MCF 10A (cell line): ENCODE measurements at regions of chrX and their contacts with region 1.

Region 1: DNA sequence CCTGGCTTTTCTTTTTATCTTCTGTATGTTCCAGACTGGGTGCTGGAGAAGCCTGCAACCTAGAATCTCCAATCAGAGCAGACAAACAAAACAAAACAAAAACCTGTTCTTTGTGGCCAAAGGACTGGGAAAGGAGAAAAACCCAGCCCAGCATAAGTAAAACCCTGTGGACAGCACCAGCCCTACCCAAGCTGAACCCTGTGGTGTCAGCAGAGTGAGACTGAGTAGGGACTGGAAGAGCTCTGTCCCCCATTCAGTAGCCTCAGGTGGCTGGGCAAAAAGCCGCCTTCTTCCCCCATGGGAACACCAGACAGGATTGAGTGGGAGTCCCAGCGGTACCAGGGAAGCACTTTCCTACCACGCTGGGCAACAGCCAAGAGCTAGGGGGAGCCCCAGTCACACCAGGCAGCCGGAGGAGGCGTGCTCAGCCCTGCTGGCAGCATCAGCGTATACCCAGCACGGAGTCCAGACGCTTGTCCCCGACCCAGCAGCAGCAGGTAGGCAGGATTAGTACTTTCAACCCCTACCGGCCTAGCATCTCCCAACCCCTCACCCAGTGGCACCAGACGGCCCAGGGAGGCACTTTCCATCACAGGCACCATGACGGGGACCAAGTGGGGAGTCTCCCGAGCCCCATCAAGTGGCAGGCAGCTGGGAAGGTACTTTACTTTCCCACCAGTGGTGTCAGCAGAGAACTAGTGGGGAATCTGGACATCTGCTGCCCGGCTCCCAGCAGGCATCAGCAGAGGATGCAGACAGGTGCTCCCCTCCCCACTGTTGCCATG is 8.6 kb upstream of the JADE3 start:
- DNase-seq: peak; percentile 81
- H3K4me3 Mint-ChIP-seq: peak overlapping the region; percentile 70
- H3K27ac Mint-ChIP-seq: no peak overlapping the region
- H3K4me1 Mint-ChIP-seq: no peaks in the 10 kb centered on the region
- H3K27me3 Mint-ChIP-seq: peaks cover 59% of the 10 kb centered on the region
- CTCF ChIP-seq: peak; percentile 42

Region 2: DNA sequence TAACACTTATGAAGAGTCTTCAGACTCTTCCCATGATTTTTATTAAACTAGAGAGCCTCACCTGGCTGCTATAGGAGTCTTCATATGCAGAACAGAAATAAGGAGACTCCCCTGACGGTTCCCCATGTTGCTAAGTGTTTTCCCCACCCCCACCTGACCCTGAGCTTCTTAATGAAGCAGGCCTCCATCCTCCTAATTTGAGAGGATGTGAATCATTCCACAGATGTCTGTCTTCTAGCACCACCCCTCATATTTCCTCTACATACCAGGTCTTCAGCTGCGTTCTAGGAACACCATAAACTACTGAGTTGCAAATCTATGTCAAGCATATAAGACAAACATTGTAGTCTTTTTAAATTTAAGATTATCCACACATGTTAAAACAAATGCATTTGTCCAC is 29.9 kb before region 1 on chrX:
- CTCF ChIA-PET with region 1: interaction called, 10 read pairs
- POLR2A ChIA-PET with region 1: no interaction called
- intact Hi-C with region 1: no loop called
- DNase-seq: peak; percentile 3
- H3K4me3 Mint-ChIP-seq: no peak overlapping the region
- H3K27ac Mint-ChIP-seq: no peak overlapping the region
- H3K4me1 Mint-ChIP-seq: peaks cover 6% of the 10 kb centered on the region
- H3K27me3 Mint-ChIP-seq: peaks cover 54% of the 10 kb centered on the region
- CTCF ChIP-seq: no peak

Region 3: GRCh38 chrX:46978341-46979291 is 75.0 kb after region 1 on chrX:
- CTCF ChIA-PET with region 1: interaction called, 22 read pairs
- POLR2A ChIA-PET with region 1: interaction called, 4 read pairs
- intact Hi-C with region 1: loop called (anchors 1 kb)
- DNase-seq: peak; percentile 86
- H3K4me3 Mint-ChIP-seq: no peak overlapping the region
- H3K27ac Mint-ChIP-seq: peak overlapping the region; percentile 67
- H3K4me1 Mint-ChIP-seq: no peaks in the 10 kb centered on the region
- H3K27me3 Mint-ChIP-seq: peaks cover 56% of the 10 kb centered on the region
- CTCF ChIP-seq: peak; percentile 71

Region 4: DNA sequence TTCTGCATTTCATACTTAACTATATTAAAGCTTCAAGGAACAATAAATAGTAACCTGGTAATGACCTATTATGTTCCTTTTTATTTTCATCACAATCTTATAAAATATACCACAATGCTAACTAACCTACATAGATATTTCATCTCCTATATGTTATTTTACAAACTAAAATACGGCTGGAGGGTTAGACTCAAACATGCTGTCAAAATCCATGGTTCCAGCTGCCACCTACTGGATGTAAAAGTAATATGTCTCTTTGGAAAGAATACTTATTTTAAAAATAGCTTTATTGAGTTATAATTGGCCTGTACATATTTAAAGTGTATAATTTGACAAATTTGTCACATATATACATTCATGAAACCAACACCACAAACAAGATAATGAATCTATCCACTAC is 189.6 kb after region 1 on chrX:
- CTCF ChIA-PET with region 1: interaction called, 4 read pairs
- POLR2A ChIA-PET with region 1: no interaction called
- intact Hi-C with region 1: loop called (anchors 2 kb)
- DNase-seq: peak; percentile 47
- H3K4me3 Mint-ChIP-seq: no peak overlapping the region
- H3K27ac Mint-ChIP-seq: no peak overlapping the region
- H3K4me1 Mint-ChIP-seq: no peaks in the 10 kb centered on the region
- H3K27me3 Mint-ChIP-seq: peaks cover 88% of the 10 kb centered on the region
- CTCF ChIP-seq: no peak

Region 5: GRCh38 chrX:47321386-47321785 is 417.7 kb after region 1 on chrX:
- CTCF ChIA-PET with region 1: no interaction called
- POLR2A ChIA-PET with region 1: no interaction called
- intact Hi-C with region 1: no loop called
- DNase-seq: no peak
- H3K4me3 Mint-ChIP-seq: no peak overlapping the region
- H3K27ac Mint-ChIP-seq: no peak overlapping the region
- H3K4me1 Mint-ChIP-seq: no peaks in the 10 kb centered on the region
- H3K27me3 Mint-ChIP-seq: peaks cover 18% of the 10 kb centered on the region
- CTCF ChIP-seq: no peak

Region 6: DNA sequence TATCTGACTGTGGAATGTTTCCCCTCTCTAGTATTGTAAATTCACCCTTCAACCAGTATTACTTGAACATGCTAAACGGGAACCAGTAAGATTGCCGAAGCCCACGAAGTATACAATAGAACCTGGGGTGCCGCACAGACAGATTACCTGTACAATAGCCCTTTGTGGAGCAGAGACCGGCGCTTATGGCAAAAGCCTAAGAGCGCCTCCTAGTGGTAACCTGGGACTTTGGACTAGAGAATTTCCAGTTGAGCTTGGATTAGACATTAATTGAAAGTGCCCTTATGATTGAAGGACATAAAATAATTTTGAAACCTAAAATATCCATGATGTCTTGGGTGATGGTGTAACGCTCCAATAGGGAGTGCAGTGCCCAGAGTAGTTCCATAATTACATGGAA is 480.9 kb after region 1 on chrX:
- CTCF ChIA-PET with region 1: no interaction called
- POLR2A ChIA-PET with region 1: no interaction called
- intact Hi-C with region 1: loop called (anchors 10 kb)
- DNase-seq: peak; percentile 75
- H3K4me3 Mint-ChIP-seq: no peak overlapping the region
- H3K27ac Mint-ChIP-seq: no peak overlapping the region
- H3K4me1 Mint-ChIP-seq: peaks cover 5% of the 10 kb centered on the region
- H3K27me3 Mint-ChIP-seq: peaks cover 25% of the 10 kb centered on the region
- CTCF ChIP-seq: peak; percentile 60